ENCODE measurements at regions of chr15 and their contacts with region 1.

Region 1: GRCh38 chr15:63104727-63105126 is 16.9 kb upstream of the LACTB start:
- DNase-seq: no peak
- ATAC-seq: no peak
- H3K4me3 ChIP-seq: no peak overlapping the region
- H3K27ac ChIP-seq: no peak overlapping the region
- H3K4me1 ChIP-seq: peaks cover 4% of the 10 kb centered on the region; the same call in 1 of the 2 replicates
- H3K27me3 ChIP-seq: no peaks in the 10 kb centered on the region
- CTCF ChIP-seq: no peak

Region 2: GRCh38 chr15:62847900-62848489 is 256.7 kb before region 1 on chr15:
- CTCF ChIA-PET with region 1: no interaction called
- POLR2A ChIA-PET with region 1: no interaction called
- in situ Hi-C with region 1: no loop called
- intact Hi-C with region 1: no loop called
- DNase-seq: peak; percentile 52
- ATAC-seq: peak; percentile 74
- H3K4me3 ChIP-seq: no peak overlapping the region
- H3K27ac ChIP-seq: peak overlapping the region; percentile 48; the same call in 1 of the 2 replicates
- H3K4me1 ChIP-seq: peaks cover 39% of the 10 kb centered on the region
- H3K27me3 ChIP-seq: no peaks in the 10 kb centered on the region
- CTCF ChIP-seq: peak; percentile 85

Region 3: GRCh38 chr15:63188926-63189871 is 84.5 kb after region 1 on chr15 and contains the start of gene RAB8B:
- CTCF ChIA-PET with region 1: interaction called, 15 read pairs
- POLR2A ChIA-PET with region 1: no interaction called
- in situ Hi-C with region 1: no loop called
- intact Hi-C with region 1: no loop called
- DNase-seq: peak; percentile 62
- ATAC-seq: peak; percentile 99
- H3K4me3 ChIP-seq: peak within 1 kb of the TSS; percentile 67 to 78
- H3K27ac ChIP-seq: peak within 1 kb of the TSS; percentile 76
- H3K4me1 ChIP-seq: peaks cover 18% of the 10 kb centered on the region
- H3K27me3 ChIP-seq: no peaks in the 10 kb centered on the region
- CTCF ChIP-seq: no peak
- total RNA-seq, gene RAB8B: 17.6 TPM

Measured in Panc1 (cell line).